CD8-positive, alpha-beta T cell (primary cell): ENCODE measurements at regions of chr7 and their contacts with region 1.

Region 1: GRCh38 chr7:65722345-65722792 is 150.5 kb upstream of the VKORC1L1 start:
- DNase-seq: peak; percentile 48 to 82 (median 73)
- ATAC-seq: peak; percentile 84
- H3K4me3 ChIP-seq: no peak overlapping the region
- H3K4me3 Mint-ChIP-seq: no peak overlapping the region
- H3K27ac ChIP-seq: no peak overlapping the region
- H3K27ac Mint-ChIP-seq: no peak overlapping the region
- H3K4me1 ChIP-seq: no peaks in the 10 kb centered on the region
- H3K4me1 Mint-ChIP-seq: peaks cover 2% of the 10 kb centered on the region
- H3K27me3 ChIP-seq: no peaks in the 10 kb centered on the region
- H3K27me3 Mint-ChIP-seq: no peaks in the 10 kb centered on the region
- CTCF ChIP-seq: peak; percentile 68

Region 2: GRCh38 chr7:65840446-65840845 is 118.1 kb after region 1 on chr7:
- CTCF ChIA-PET with region 1: interaction called, 11 read pairs
- POLR2A ChIA-PET with region 1: no interaction called
- intact Hi-C with region 1: loop called in 1 of 2 experiments (anchors 5 kb)
- DNase-seq: peak in 1 of 9 experiments; percentile 26
- ATAC-seq: no peak
- H3K4me3 ChIP-seq: no peak overlapping the region
- H3K4me3 Mint-ChIP-seq: no peak overlapping the region
- H3K27ac ChIP-seq: no peak overlapping the region
- H3K27ac Mint-ChIP-seq: no peak overlapping the region
- H3K4me1 ChIP-seq: no peaks in the 10 kb centered on the region
- H3K4me1 Mint-ChIP-seq: peaks cover 2% of the 10 kb centered on the region
- H3K27me3 ChIP-seq: no peaks in the 10 kb centered on the region
- H3K27me3 Mint-ChIP-seq: no peaks in the 10 kb centered on the region
- CTCF ChIP-seq: no peak

Region 3: DNA sequence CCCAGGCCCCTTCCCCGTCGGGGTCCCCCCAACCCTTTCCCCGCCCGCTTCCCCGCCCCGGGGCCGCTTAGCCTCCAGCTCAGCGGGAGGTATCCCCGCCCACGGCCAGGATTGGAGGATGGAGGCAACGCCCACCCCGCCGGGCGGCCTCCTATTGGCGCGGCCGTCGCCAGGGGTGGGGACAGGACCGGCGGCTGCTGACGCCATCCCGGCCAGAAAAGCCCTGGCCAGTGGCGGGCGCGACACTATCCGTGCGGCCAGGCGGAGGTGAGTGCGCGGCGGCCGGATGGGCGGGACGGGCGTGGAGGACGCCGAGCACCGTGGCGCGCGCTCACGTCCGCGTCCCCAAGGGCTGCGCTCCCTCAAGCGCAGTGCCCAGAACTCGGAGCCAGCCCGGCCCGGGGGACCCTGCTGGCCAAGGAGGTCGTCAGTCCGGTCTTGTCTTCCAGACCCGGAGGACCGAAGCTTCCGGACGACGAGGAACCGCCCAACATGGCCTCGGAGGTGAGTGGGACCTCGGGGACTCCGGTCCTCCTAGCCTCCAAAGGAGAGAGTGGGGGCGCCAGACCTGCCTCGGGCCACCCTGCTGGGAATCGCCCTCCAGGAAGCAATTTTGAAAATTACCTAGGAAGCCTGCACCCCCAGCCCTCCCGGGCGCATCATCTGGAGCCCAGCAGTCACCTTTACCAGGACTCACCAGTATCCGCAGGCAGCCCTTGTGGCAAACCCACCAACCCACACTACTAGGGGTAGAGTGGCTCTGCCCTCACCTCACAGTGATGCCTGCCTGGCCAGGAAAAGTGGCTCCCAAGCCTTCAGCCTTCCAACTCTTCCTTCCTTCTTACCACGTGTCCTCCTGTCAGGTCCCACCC is 353.5 kb after region 1 on chr7 and contains the start of gene ASL:
- CTCF ChIA-PET with region 1: interaction called, 3 read pairs
- POLR2A ChIA-PET with region 1: no interaction called
- intact Hi-C with region 1: loop called in 1 of 2 experiments (anchors 10 kb)
- DNase-seq: peak; percentile 65 to 93 (median 84)
- ATAC-seq: peak; percentile 98
- H3K4me3 ChIP-seq: peak within 1 kb of the TSS; percentile 66 to 96
- H3K4me3 Mint-ChIP-seq: peak within 1 kb of the TSS; percentile 87
- H3K27ac ChIP-seq: peak within 1 kb of the TSS; percentile 55 to 67
- H3K27ac Mint-ChIP-seq: no peak within 1 kb of the TSS
- H3K4me1 ChIP-seq: peaks cover 11% of the 10 kb centered on the region
- H3K4me1 Mint-ChIP-seq: peaks cover 14% of the 10 kb centered on the region
- H3K27me3 ChIP-seq: no peaks in the 10 kb centered on the region
- H3K27me3 Mint-ChIP-seq: no peaks in the 10 kb centered on the region
- CTCF ChIP-seq: no peak
- total RNA-seq, gene ASL: 6.8 to 7.5 TPM

Region 4: DNA sequence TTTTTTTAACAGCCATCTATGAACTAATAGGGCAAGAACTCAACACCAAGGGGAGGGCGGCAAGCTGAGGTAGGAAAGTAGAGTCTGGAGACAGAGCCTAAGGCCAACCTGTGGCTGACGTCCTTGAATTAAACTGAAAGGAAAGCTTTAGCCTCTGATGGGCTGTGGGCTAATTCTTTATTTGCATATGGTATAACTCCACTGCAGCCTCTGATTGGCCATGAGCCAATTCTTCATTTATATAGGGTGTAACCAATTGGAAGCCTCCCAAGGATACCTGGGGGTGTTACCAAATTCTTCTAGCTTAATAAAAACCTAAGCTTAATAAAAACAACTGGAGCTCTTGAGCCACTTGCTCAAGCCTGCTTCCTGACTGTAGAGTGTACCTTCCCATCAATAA is 1284.6 kb after region 1 on chr7:
- CTCF ChIA-PET with region 1: no interaction called
- POLR2A ChIA-PET with region 1: no interaction called
- intact Hi-C with region 1: loop called in 1 of 2 experiments (anchors 10 kb)
- DNase-seq: no peak
- ATAC-seq: no peak
- H3K4me3 ChIP-seq: no peak overlapping the region
- H3K4me3 Mint-ChIP-seq: no peak overlapping the region
- H3K27ac ChIP-seq: no peak overlapping the region
- H3K27ac Mint-ChIP-seq: no peak overlapping the region
- H3K4me1 ChIP-seq: no peaks in the 10 kb centered on the region
- H3K4me1 Mint-ChIP-seq: peaks cover 16% of the 10 kb centered on the region
- H3K27me3 ChIP-seq: no peaks in the 10 kb centered on the region
- H3K27me3 Mint-ChIP-seq: no peaks in the 10 kb centered on the region
- CTCF ChIP-seq: no peak